ENCODE measurements at regions of chr22 and their contacts with region 1.

Region 1: DNA sequence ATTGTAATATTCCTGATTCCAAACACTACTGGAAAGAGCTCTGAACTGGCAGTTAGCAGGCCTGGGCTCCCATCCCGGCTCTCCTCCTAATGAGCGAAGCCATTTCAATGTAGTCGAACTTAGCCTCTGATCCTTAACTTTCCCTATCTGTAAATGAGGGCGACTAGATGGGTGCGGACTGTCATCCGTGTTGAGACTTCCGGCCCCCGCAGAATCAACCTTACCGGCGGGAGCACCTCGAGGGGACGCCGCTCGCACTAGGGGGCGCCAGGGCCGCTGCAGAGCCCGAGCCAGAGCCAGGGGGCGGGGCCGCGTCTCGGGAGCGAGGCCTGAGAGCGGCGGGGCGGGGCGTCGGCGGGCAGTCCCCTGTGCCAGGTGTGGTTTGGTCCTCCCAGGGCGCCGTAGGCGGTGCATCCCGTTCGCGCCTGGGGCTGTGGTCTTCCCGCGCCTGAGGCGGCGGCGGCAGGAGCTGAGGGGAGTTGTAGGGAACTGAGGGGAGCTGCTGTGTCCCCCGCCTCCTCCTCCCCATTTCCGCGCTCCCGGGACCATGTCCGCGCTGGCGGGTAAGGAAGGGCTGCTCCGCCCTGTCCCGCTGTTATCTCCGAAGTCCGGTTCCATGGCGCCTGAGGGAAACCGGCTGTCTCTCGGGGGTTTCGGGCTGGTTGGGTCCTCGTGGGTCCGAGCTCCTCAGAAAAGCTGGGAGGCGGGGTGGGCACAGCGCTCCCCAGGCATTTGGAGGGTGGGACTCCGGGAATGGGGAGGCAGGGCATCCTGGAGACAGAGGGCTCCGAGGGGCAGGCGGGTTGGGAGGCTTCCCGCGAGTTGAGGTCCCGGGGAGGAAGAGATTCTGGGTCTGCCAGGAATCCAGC is at the start of gene LIMK2:
- DNase-seq: peak; percentile 97
- H3K4me3 ChIP-seq: peak within 1 kb of the TSS; percentile 58 to 84
- H3K27ac ChIP-seq: peak within 1 kb of the TSS; percentile 24 to 48; a peak in 2 of 4 replicates
- H3K4me1 ChIP-seq: peaks cover 0 to 11% of the 10 kb centered on the region in 2 experiments; a peak in 2 of 4 replicates
- H3K27me3 ChIP-seq: no peaks in the 10 kb centered on the region
- CTCF ChIP-seq: peak; percentile 91
- EP300 ChIP-seq: peak in 1 of 2 experiments; percentile 39; a peak in 1 of 4 replicates
- RAD21 ChIP-seq: peak; percentile 74
- polyA plus RNA-seq, gene LIMK2: 9.8 and 10.7 TPM in 2 replicates

Region 2: GRCh38 chr22:31199183-31199582 is 12.9 kb before region 1 on chr22:
- CTCF ChIA-PET with region 1: interaction called, 45 read pairs
- POLR2A ChIA-PET with region 1: interaction called, 3 read pairs
- DNase-seq: no peak
- H3K4me3 ChIP-seq: no peak overlapping the region
- H3K27ac ChIP-seq: no peak overlapping the region
- H3K4me1 ChIP-seq: no peaks in the 10 kb centered on the region
- H3K27me3 ChIP-seq: no peaks in the 10 kb centered on the region
- CTCF ChIP-seq: peak; percentile 22; the same call in 1 of the 2 replicates
- EP300 ChIP-seq: no peak
- RAD21 ChIP-seq: no peak

Region 3: DNA sequence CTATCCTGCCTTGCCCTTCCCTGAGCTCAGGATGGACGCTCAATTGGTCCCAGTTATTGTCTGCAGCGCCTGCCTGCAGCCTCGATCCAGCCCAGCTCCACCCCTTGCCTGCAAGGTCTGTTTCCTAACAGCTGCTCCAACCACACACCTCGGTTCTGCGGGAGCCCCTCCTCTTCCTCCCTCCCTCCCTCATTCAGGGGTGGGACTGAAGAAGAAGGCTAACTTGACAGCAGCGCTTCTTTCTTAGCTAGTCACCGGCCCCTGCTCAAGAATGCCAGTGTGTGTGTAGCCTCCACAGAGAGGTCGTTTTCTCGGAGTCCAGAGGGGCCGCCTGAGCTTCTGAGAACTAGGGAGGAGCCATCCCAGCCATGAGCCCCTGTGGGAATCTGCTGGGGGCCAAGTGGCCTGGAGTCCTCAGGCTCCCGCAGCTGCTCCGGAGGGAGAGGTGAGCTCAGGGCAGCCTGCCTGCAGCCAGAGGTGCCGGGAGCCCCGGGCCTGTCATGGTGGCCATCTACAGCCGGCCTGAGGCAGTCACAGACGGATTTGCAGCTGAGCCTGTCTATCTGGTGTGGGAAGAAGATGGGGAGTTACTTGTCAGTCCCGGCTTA is 36.1 kb after region 1 on chr22:
- CTCF ChIA-PET with region 1: interaction called, 50 read pairs
- POLR2A ChIA-PET with region 1: interaction called, 4 read pairs
- DNase-seq: peak; percentile 85
- H3K4me3 ChIP-seq: peak overlapping the region; percentile 73 to 80
- H3K27ac ChIP-seq: peak overlapping the region; percentile 61 to 88
- H3K4me1 ChIP-seq: peaks cover 15 to 63% of the 10 kb centered on the region in 2 experiments
- H3K27me3 ChIP-seq: no peaks in the 10 kb centered on the region
- CTCF ChIP-seq: no peak
- EP300 ChIP-seq: no peak
- RAD21 ChIP-seq: no peak

Region 4: GRCh38 chr22:31262312-31263080 is 50.4 kb after region 1 on chr22:
- CTCF ChIA-PET with region 1: interaction called, 10 read pairs
- POLR2A ChIA-PET with region 1: no interaction called
- DNase-seq: no peak
- H3K4me3 ChIP-seq: no peak overlapping the region
- H3K27ac ChIP-seq: peak overlapping the region in 1 of 2 experiments; percentile 44; a peak in 1 of 4 replicates
- H3K4me1 ChIP-seq: peaks cover 0 to 14% of the 10 kb centered on the region in 2 experiments; a peak in 1 of 4 replicates
- H3K27me3 ChIP-seq: no peaks in the 10 kb centered on the region
- CTCF ChIP-seq: no peak
- EP300 ChIP-seq: no peak
- RAD21 ChIP-seq: no peak

Region 5: DNA sequence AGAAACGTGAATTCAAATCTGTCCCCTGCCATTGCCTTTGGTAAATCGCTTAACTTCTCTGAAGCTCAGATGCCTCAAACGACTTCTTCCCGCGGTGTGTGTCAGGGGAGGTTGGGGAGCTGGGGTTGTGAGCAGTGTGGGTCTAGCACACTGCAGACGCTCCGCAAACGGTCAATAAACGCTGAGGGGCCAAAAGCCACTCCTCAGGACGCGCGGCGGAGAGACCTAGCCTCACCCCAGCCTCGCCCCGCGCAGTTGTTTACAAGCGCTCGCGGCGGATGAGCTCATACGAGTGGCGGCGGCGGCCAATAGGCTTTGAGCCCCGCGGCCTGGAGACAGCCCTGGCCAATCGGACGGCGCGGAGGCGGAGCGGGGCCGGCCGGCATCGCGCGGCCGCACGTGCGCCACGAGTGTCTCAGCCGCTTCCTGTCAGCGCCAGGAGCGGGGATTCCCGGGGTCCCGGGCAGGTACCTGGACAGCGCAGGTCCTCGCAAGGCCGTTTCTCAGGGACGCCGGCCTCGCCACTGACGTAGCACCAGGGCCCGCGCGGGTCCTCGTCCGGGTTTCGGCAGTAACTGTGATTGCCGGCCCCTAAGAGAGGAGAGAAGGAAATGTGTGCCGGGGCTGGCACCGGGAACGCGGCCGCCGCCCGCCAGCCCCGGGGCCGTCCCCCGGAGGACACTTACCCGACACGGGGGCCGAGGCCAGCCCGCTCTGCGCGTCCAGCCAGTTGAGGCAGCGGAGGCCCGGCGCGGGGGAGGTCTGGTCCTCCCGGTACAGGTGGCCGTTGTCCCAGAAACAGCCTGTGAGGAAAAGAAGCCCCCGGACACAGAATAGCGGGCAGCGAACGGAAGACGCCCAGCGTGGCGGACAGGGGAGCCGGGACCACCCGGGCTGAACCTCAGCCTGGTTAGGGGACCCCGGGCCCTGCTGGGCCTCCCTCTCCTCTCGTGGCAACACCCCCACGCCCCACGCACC is 78.7 kb after region 1 on chr22:
- CTCF ChIA-PET with region 1: interaction called, 14 read pairs
- POLR2A ChIA-PET with region 1: no interaction called
- DNase-seq: peak; percentile 96
- H3K4me3 ChIP-seq: peak overlapping the region; percentile 69 to 74
- H3K27ac ChIP-seq: peak overlapping the region; percentile 51 to 96
- H3K4me1 ChIP-seq: peaks cover 7 to 21% of the 10 kb centered on the region in 2 experiments; a peak in 3 of 4 replicates
- H3K27me3 ChIP-seq: no peaks in the 10 kb centered on the region
- CTCF ChIP-seq: no peak
- EP300 ChIP-seq: peak; percentile 9 to 73; a peak in 3 of 4 replicates
- RAD21 ChIP-seq: no peak

Measured in SK-N-SH (cell line).